ENCODE measurements at regions of chr20 and their contacts with region 1.

Region 1: GRCh38 chr20:8749986-8750385 is 318.9 kb upstream of the PLCB4 start:
- DNase-seq: peak; percentile 33
- ATAC-seq: no peak
- H3K4me3 ChIP-seq: no peak overlapping the region
- H3K27ac ChIP-seq: no peak overlapping the region
- H3K4me1 ChIP-seq: no peaks in the 10 kb centered on the region
- H3K27me3 ChIP-seq: 0 out of 2 replicates have a peak, but pooled peaks cover 3% of the 10 kb centered on the region
- CTCF ChIP-seq: no peak

Region 2: GRCh38 chr20:8443464-8444072 is 306.4 kb before region 1 on chr20:
- CTCF ChIA-PET with region 1: no interaction called
- POLR2A ChIA-PET with region 1: no interaction called
- intact Hi-C with region 1: no loop called
- DNase-seq: no peak
- ATAC-seq: no peak
- H3K4me3 ChIP-seq: no peak overlapping the region
- H3K27ac ChIP-seq: no peak overlapping the region
- H3K4me1 ChIP-seq: no peaks in the 10 kb centered on the region
- H3K27me3 ChIP-seq: 0 out of 2 replicates have a peak, but pooled peaks cover 11% of the 10 kb centered on the region
- CTCF ChIP-seq: no peak

Region 3: GRCh38 chr20:9359561-9360308 is 609.7 kb after region 1 on chr20:
- CTCF ChIA-PET with region 1: no interaction called
- POLR2A ChIA-PET with region 1: no interaction called
- intact Hi-C with region 1: loop called (anchors 2 kb)
- DNase-seq: peak; percentile 78
- ATAC-seq: peak; percentile 78
- H3K4me3 ChIP-seq: no peak overlapping the region
- H3K27ac ChIP-seq: no peak overlapping the region
- H3K4me1 ChIP-seq: no peaks in the 10 kb centered on the region
- H3K27me3 ChIP-seq: no peaks in the 10 kb centered on the region
- CTCF ChIP-seq: peak; percentile 85